ENCODE measurements at regions of chr13 and their contacts with region 1.

Region 1: GRCh38 chr13:40682449-40683240 is 16.2 kb upstream of the FOXO1 start:
- DNase-seq: no peak
- H3K4me3 ChIP-seq: no peak overlapping the region
- H3K4me3 Mint-ChIP-seq: no peak overlapping the region
- H3K27ac Mint-ChIP-seq: no peak overlapping the region
- H3K4me1 ChIP-seq: peaks cover 15% of the 10 kb centered on the region
- H3K4me1 Mint-ChIP-seq: peaks cover 18% of the 10 kb centered on the region
- H3K27me3 ChIP-seq: no peaks in the 10 kb centered on the region
- H3K27me3 Mint-ChIP-seq: no peaks in the 10 kb centered on the region
- CTCF ChIP-seq: peak; percentile 36 to 71

Region 2: GRCh38 chr13:39779337-39780265 is 903.0 kb before region 1 on chr13:
- CTCF ChIA-PET with region 1: no interaction called
- POLR2A ChIA-PET with region 1: no interaction called
- intact Hi-C with region 1: loop called (anchors 2 kb)
- DNase-seq: no peak
- H3K4me3 ChIP-seq: no peak overlapping the region
- H3K4me3 Mint-ChIP-seq: no peak overlapping the region
- H3K27ac Mint-ChIP-seq: no peak overlapping the region
- H3K4me1 ChIP-seq: no peaks in the 10 kb centered on the region
- H3K4me1 Mint-ChIP-seq: peaks cover 7% of the 10 kb centered on the region
- H3K27me3 ChIP-seq: no peaks in the 10 kb centered on the region
- H3K27me3 Mint-ChIP-seq: peaks cover 2% of the 10 kb centered on the region
- CTCF ChIP-seq: no peak

Region 3: GRCh38 chr13:40251343-40252032 is 431.2 kb before region 1 on chr13:
- CTCF ChIA-PET with region 1: no interaction called
- POLR2A ChIA-PET with region 1: no interaction called
- intact Hi-C with region 1: loop called (anchors 2 kb)
- DNase-seq: no peak
- H3K4me3 ChIP-seq: no peak overlapping the region
- H3K4me3 Mint-ChIP-seq: no peak overlapping the region
- H3K27ac Mint-ChIP-seq: no peak overlapping the region
- H3K4me1 ChIP-seq: peaks cover 6% of the 10 kb centered on the region; the same call in 1 of the 2 replicates
- H3K4me1 Mint-ChIP-seq: no peaks in the 10 kb centered on the region
- H3K27me3 ChIP-seq: no peaks in the 10 kb centered on the region
- H3K27me3 Mint-ChIP-seq: no peaks in the 10 kb centered on the region
- CTCF ChIP-seq: no peak

Region 4: GRCh38 chr13:40732658-40733057 is 50.0 kb after region 1 on chr13:
- CTCF ChIA-PET with region 1: no interaction called
- POLR2A ChIA-PET with region 1: no interaction called
- intact Hi-C with region 1: no loop called
- DNase-seq: no peak
- H3K4me3 ChIP-seq: no peak overlapping the region
- H3K4me3 Mint-ChIP-seq: no peak overlapping the region
- H3K27ac Mint-ChIP-seq: no peak overlapping the region
- H3K4me1 ChIP-seq: no peaks in the 10 kb centered on the region
- H3K4me1 Mint-ChIP-seq: no peaks in the 10 kb centered on the region
- H3K27me3 ChIP-seq: no peaks in the 10 kb centered on the region
- H3K27me3 Mint-ChIP-seq: no peaks in the 10 kb centered on the region
- CTCF ChIP-seq: no peak

Region 5: DNA sequence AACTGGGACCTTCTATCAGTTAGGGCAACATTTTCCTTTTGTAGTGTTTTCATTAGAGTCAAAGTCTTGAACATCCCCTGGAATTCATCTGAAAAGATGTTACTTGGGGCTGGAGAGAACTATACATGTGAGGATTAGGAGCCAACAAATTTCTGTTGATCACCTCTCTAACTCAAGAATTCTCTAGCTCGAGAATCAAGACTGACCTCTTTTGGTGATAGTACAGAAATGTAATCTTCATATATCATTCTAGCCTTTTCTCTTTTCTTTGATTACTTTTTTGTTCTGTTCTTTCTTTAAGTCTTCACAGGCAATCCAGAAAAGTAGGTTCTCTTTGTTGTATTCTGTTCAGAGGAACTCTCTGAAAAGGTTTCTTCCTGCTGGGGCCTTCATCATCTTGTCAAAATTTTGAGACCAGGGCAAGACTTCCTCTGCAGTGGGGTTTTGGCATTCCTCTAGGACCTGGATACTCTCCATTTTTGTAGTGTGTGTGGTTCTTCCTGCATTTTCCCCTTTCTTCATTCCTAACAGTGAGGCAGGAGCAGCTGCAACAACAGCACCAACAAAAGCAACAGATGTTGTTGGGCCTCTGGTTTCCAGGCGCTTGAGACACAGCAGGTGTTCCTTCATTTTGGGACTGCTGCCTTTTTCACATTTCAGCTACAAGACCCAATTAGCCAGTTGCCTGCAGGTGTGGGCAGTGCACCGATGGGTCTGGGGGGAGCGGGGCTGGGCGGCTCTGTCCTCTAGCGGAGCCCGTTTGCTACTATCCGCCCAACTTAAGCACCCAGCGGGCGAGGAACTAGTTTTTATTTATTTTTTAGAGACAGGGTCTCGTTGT is 310.3 kb after region 1 on chr13:
- CTCF ChIA-PET with region 1: no interaction called
- POLR2A ChIA-PET with region 1: no interaction called
- intact Hi-C with region 1: no loop called
- DNase-seq: no peak
- H3K4me3 ChIP-seq: no peak overlapping the region
- H3K4me3 Mint-ChIP-seq: no peak overlapping the region
- H3K27ac Mint-ChIP-seq: peak overlapping the region; percentile 91
- H3K4me1 ChIP-seq: peaks cover 44% of the 10 kb centered on the region
- H3K4me1 Mint-ChIP-seq: peaks cover 31% of the 10 kb centered on the region
- H3K27me3 ChIP-seq: no peaks in the 10 kb centered on the region
- H3K27me3 Mint-ChIP-seq: no peaks in the 10 kb centered on the region
- CTCF ChIP-seq: no peak

Measured in Caco-2 (cell line).